Activated CD8-positive, alpha-beta memory T cell treated with anti-CD3 and anti-CD28 coated beads, Interleukin-2, amount 10 ng/mL, durations not matched to agents 7 days and 5 days (primary cell): ENCODE measurements at regions of chr13 and their contacts with region 1.

Region 1: DNA sequence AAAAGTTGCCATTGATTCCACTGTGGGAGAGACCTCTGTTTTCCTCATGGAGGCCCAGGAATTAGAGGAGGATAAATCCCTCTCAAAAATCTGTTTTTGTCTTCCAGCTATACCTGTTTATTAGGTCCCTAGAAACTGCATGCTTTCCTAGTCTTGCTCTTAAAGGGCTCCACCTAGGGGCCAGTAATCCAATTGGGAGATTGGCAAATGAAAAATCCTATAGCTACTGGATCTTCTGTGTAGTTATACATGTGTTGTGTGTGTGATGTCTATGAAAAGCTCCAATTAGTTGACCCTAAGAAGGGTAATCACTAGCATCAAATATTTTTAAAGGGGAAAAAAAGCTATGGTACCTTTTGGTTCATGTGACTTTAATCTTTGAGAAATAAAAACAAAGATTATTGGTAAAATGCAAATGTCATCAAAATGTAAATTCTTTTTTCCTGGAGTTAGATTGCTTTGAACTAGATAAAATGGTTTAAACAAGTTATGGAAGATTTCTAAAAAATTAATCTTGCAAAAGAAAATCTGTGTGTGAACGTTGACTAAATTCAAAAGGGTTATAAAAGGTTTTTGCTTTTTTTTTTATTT is 63.4 kb upstream of the C1QTNF9B start:
- DNase-seq: no peak
- ATAC-seq: no peak
- H3K4me3 Mint-ChIP-seq: no peak overlapping the region
- H3K27ac Mint-ChIP-seq: no peak overlapping the region
- H3K4me1 Mint-ChIP-seq: peaks cover 37% of the 10 kb centered on the region
- H3K27me3 Mint-ChIP-seq: peaks cover 4% of the 10 kb centered on the region

Region 2: GRCh38 chr13:23447927-23448326 is 512.7 kb before region 1 on chr13:
- CTCF ChIA-PET with region 1: no interaction called
- DNase-seq: no peak
- ATAC-seq: no peak
- H3K4me3 Mint-ChIP-seq: no peak overlapping the region
- H3K27ac Mint-ChIP-seq: no peak overlapping the region
- H3K4me1 Mint-ChIP-seq: no peaks in the 10 kb centered on the region
- H3K27me3 Mint-ChIP-seq: peaks cover 7% of the 10 kb centered on the region

Region 3: GRCh38 chr13:23828866-23829265 is 131.8 kb before region 1 on chr13:
- CTCF ChIA-PET with region 1: no interaction called
- DNase-seq: no peak
- ATAC-seq: no peak
- H3K4me3 Mint-ChIP-seq: no peak overlapping the region
- H3K27ac Mint-ChIP-seq: no peak overlapping the region
- H3K4me1 Mint-ChIP-seq: no peaks in the 10 kb centered on the region
- H3K27me3 Mint-ChIP-seq: no peaks in the 10 kb centered on the region

Region 4: DNA sequence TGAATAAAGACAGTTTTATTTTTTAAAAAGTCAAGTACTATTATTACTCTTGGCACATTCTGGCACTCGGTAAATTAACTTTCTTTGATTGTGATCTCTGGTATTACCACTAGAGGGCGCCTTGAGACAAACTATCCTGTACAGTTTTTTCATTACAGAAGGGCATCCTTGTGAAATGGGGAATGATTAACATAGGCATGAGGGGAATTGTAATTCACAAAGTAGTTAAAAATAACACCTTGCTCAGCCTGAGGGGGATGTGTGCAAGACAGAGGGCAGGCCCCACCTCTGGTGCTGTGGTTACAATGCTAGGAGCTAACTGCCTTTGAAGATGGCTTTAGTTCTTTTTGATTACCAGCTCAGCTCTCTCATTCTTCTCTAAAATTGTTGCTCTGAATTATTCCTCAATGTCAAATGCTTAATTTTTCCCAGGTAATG is 39.2 kb before region 1 on chr13:
- CTCF ChIA-PET with region 1: interaction called, 25 read pairs
- DNase-seq: no peak
- ATAC-seq: no peak
- H3K4me3 Mint-ChIP-seq: no peak overlapping the region
- H3K27ac Mint-ChIP-seq: no peak overlapping the region
- H3K4me1 Mint-ChIP-seq: no peaks in the 10 kb centered on the region
- H3K27me3 Mint-ChIP-seq: peaks cover 59% of the 10 kb centered on the region

Region 5: DNA sequence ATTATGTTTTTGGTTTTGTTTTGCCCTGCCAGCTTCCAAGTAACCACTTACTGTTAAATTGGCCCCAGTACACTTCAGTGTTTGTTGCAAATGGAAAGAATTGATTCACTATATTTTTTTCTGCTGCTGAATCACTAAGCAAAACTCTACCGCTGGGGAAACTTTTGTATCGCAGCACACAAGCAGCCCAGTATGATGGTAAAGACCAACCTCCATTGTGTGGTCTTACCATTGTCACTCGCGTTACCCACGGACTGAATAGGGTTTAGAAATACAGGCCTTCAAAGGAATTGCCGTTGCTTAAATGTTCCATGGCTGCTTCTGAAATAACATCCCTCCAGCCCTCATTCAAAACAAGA is 207.7 kb after region 1 on chr13:
- CTCF ChIA-PET with region 1: no interaction called
- DNase-seq: no peak
- ATAC-seq: peak; percentile 20
- H3K4me3 Mint-ChIP-seq: no peak overlapping the region
- H3K27ac Mint-ChIP-seq: no peak overlapping the region
- H3K4me1 Mint-ChIP-seq: peaks cover 33% of the 10 kb centered on the region
- H3K27me3 Mint-ChIP-seq: no peaks in the 10 kb centered on the region